Dorsolateral prefrontal cortex (tissue), 120 donors: ENCODE measurements at regions of chr17 and their contacts with region 1.

Region 1: GRCh38 chr17:83073444-83074063 is 5.9 kb upstream of the METRNL start:
- DNase-seq: no peak
- H3K4me3 ChIP-seq: no peak overlapping the region
- H3K27ac ChIP-seq: no peak overlapping the region
- H3K27me3 ChIP-seq: no peaks in the 10 kb centered on the region
- CTCF ChIP-seq: no peak

Region 2: GRCh38 chr17:82823004-82823403 is 250.6 kb before region 1 on chr17:
- intact Hi-C with region 1: no loop called
- DNase-seq: no peak
- H3K4me3 ChIP-seq: no peak overlapping the region
- H3K27ac ChIP-seq: no peak overlapping the region
- H3K27me3 ChIP-seq: no peaks in the 10 kb centered on the region
- CTCF ChIP-seq: peak in 3 of 56 donors; percentile 18 to 27 (median 20)

Region 3: DNA sequence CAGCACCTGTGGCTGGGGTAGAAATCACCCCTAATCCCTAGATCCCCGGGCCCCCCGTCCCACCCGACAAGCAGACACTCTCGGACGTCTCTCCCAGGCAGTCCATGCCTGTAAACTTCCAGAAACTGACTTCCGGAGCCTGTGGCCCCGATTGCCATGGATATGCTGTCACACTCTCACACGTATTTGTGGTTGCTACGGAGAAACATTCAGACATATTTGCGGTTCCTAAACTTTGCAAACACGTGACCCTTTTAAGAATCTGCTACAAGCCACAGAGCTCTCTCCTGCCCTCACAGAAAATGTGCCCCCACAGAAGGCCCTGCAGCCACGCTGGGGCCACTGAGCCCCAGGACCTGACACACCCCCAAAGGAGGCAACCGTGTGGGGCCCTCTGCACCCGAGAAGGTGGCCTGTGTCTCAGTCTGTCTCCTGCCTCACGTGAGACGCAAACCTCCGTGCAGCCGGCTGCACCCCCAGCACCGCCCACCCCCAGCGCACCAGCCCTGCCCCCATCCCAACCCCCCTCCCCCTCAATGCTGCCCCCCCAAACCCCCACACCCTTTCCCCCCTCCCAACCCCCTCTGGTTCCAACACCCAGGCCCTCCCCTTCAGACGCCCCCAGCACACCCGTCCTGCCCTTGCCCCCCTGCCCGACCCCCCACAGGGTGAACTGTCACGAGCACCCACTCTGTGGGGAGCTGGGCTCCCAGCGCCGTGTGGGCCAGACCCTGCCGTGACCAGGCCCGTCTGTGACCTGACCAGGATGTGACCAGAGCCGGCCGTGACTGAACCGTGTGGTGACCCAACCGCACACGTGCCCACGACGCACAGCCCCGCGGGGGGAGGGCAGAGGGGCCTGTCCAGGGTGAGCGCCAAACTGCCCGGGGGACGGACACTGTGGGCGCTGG is 60.4 kb before region 1 on chr17:
- intact Hi-C with region 1: no loop called
- DNase-seq: no peak
- H3K4me3 ChIP-seq: no peak overlapping the region
- H3K27ac ChIP-seq: no peak overlapping the region
- H3K27me3 ChIP-seq: no peaks in the 10 kb centered on the region
- CTCF ChIP-seq: no peak

Region 4: DNA sequence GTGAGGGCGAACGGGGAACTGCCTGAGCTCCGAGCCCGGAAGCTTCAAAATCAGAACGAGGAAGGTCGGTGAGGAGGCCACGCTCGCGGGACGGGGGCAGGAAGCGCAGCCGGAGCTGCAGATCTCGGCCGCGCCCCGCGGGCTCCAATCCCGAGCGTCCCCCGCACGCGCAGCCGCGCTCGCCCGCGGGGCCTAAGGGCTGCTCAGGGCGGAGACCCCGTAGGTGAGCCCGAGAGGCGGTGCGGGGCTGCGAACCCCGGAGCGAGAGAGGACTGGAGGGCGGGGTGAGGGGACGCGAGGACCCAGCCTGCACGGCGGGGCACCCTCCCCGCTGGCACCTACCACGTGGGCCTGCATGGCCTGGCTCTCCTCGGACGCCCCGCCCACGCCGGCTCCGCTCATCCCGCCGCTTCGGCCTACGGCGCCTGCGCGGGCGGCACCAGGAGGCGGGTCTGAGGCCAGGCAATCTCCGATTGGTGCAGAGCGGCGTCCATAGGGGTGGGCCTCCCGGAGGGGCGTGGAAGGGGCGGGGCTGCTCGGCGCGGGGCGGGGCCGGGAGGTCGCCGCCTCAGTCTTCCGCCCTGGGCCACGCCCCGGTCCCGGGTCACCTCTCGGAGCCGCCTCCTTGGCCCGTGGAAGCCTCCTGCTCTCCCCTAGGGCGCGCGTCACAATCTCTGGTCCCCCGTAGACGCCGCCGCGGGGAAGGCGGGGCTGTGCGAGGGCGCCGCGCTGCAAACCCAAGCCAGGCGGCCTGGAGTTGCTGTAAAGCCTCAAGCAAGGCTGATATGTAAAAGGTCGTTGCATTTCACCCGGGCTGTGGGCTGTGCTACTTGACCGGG is 21.9 kb before region 1 on chr17:
- intact Hi-C with region 1: loop called in 1 of 2 experiments (anchors 2 kb)
- DNase-seq: peak; percentile 91 to 99 (median 96)
- H3K4me3 ChIP-seq: peak overlapping the region; percentile 58 to 95 (median 87)
- H3K27ac ChIP-seq: peak overlapping the region in 57 of 59 donors; percentile 28 to 92 (median 81)
- H3K27me3 ChIP-seq: no peaks in the 10 kb centered on the region
- CTCF ChIP-seq: peak in 21 of 56 donors; percentile 5 to 50 (median 18)